ENCODE measurements at regions of chr14 and their contacts with region 1.

Region 1: GRCh38 chr14:74109369-74109768 is 24.6 kb downstream of the LIN52 start:
- DNase-seq: no peak
- ATAC-seq: no peak
- H3K4me3 ChIP-seq: no peak overlapping the region
- H3K27ac ChIP-seq: no peak overlapping the region
- H3K4me1 ChIP-seq: no peaks in the 10 kb centered on the region
- H3K27me3 ChIP-seq: no peaks in the 10 kb centered on the region
- CTCF ChIP-seq: no peak

Region 2: DNA sequence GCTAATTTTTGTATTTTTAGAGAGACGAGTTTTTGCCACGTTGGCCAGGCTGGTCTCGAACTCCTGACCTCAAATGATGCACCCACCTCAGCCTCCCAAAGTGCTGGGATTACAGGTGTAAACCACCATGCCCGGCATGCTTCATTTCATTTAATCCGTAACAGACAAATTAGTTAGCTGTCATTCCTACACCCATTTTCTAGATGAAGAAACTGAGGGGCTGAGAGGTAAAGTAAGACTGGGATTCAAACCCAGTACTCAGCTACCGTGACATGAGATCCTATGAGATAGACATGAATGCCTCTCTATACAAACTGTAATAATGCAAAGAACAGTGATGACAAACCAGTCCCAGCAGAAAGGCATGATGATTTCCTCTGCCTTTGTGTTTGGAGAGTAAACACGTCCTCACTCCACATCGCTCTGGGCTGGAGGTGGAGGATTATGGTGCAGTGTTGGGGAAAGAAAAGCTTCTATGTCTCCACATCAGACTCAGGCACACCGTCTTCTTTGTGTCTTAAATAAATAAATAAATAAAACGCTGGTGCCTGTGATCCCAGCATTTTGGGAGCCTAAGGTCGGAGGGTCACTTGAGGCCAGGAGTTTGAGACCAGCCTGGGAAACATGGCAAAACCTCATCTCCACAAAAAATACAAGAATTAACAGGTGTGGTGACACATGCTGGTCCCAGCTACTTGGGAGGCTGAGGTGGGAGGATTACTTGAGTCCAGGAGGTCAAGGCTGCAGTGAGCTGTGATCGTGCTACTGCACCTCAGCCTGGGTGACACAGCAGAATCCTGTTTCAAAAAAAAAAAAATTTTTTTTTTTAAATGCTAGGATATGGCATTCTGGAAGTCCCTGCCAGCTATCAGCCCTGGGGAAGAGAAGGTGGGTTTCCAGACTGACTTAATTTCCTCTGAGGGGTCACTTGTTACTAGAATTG is 140.3 kb after region 1 on chr14:
- intact Hi-C with region 1: loop called (anchors 2 kb)
- DNase-seq: no peak
- ATAC-seq: no peak
- H3K4me3 ChIP-seq: no peak overlapping the region
- H3K27ac ChIP-seq: no peak overlapping the region
- H3K4me1 ChIP-seq: peaks cover 3% of the 10 kb centered on the region
- H3K27me3 ChIP-seq: peaks cover 0 to 10% (median 6%) of the 10 kb centered on the region in 3 donors
- CTCF ChIP-seq: no peak

Region 3: GRCh38 chr14:74257078-74257989 is 148.0 kb after region 1 on chr14:
- intact Hi-C with region 1: loop called in 1 of 2 experiments (anchors 1 kb)
- DNase-seq: peak; percentile 41 to 72
- ATAC-seq: peak; percentile 84 to 95 (median 92)
- H3K4me3 ChIP-seq: peak overlapping the region; percentile 84
- H3K27ac ChIP-seq: no peak overlapping the region
- H3K4me1 ChIP-seq: peaks cover 10% of the 10 kb centered on the region
- H3K27me3 ChIP-seq: peaks cover 0 to 14% (median 8%) of the 10 kb centered on the region in 3 donors
- CTCF ChIP-seq: peak; percentile 91

Measured in psoas muscle (tissue), 8 donors.